Aorta (tissue), 5 donors: ENCODE measurements at regions of chr14 and their contacts with region 1.

Region 1: DNA sequence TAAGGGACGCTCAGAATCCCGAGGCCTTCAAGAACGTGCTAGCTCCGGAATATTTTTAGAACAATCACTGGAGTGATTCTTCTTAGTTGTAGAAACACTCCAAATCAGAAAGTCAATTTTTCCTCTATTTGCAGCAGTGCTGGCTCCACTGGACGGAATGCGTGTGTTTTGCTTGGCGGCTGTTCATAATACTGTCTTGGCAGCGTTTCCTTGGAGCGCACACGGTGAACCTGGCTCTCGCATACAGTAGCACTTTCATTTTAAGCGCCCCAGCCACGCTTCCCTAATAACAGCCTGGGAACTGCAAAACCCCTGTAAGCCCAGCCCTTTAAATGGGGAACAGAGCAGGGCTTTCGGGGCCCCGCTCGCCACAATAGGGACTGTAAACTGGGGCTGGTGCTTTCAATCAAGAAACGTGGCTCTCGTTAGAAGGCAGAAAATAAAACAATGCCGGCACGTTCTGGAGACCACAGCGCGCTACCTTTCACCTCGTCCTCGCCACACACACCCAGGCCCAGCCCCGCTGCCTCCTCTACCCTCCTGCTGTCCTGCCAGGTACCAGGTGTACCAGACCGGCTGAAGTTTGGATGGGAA is 79.9 kb downstream of the BCL11B start:
- DNase-seq: peak; percentile 76 to 83
- ATAC-seq: peak; percentile 79
- H3K4me3 ChIP-seq: peak overlapping the region in 1 of 2 donors; percentile 13
- H3K27ac ChIP-seq: no peak overlapping the region
- H3K4me1 ChIP-seq: no peaks in the 10 kb centered on the region
- H3K27me3 ChIP-seq: no peaks in the 10 kb centered on the region

Region 2: GRCh38 chr14:99101855-99102461 is 90.2 kb before region 1 on chr14:
- intact Hi-C with region 1: no loop called
- DNase-seq: no peak
- ATAC-seq: no peak
- H3K4me3 ChIP-seq: no peak overlapping the region
- H3K27ac ChIP-seq: no peak overlapping the region
- H3K4me1 ChIP-seq: no peaks in the 10 kb centered on the region
- H3K27me3 ChIP-seq: peaks cover 0 to 2% of the 10 kb centered on the region in 2 donors

Region 3: DNA sequence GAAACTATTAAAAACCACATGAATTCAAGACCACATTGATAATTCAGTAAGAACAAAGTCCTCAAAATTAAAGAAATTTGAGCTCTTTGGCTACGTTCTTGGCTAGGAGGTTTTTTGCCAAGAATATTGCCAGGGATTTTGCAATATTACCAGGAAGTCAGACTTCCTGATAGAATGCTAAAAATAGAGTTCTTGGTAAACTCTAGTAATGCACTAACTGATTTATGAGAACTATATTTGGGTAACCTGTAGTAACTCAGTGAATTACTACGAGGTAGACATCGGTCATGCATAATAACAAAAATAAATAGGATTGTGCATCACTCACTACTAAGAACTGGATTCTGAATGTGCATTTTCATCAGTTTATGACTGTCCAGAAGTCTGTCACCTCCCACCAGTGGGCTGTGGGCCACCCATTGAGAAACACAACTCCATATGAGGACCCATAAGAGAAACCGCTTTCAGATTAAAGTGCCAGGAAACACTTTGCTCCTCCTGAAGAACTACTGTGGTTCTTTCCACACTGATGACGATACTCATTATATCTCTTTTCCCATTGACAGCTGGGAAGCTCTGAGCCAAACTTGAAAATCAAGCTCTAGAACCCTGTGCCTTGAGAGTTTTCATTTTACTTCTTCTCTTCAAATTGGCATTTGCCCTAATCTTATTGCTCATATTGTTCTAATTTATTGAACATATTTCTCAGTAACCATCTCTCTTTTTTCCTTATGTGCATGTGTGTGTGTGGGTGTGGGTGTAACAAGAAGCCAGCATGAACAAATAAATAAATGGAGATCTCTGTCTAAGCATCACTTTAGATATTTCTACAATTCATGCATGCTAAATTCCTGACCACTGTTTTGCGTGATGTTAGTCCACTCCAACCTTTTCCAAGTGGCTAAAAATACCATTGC is 36.7 kb before region 1 on chr14:
- intact Hi-C with region 1: loop called in 1 of 2 experiments (anchors 5 kb)
- DNase-seq: peak in 1 of 2 donors; percentile 70
- ATAC-seq: peak; percentile 75
- H3K4me3 ChIP-seq: no peak overlapping the region
- H3K27ac ChIP-seq: no peak overlapping the region
- H3K4me1 ChIP-seq: peaks cover 0 to 2% of the 10 kb centered on the region in 2 donors
- H3K27me3 ChIP-seq: no peaks in the 10 kb centered on the region